Activated CD8-positive, alpha-beta memory T cell treated with anti-CD3 and anti-CD28 coated beads, Interleukin-2, amount 10 ng/mL, durations not matched to agents 7 days and 5 days (primary cell): ENCODE measurements at regions of chr2 and their contacts with region 1.

Region 1: GRCh38 chr2:96554293-96555145 is 18.0 kb downstream of the ARID5A start:
- DNase-seq: peak; percentile 76
- ATAC-seq: peak; percentile 79
- H3K4me3 Mint-ChIP-seq: no peak overlapping the region
- H3K27ac Mint-ChIP-seq: no peak overlapping the region
- H3K4me1 Mint-ChIP-seq: peaks cover 38% of the 10 kb centered on the region
- H3K27me3 Mint-ChIP-seq: no peaks in the 10 kb centered on the region

Region 2: GRCh38 chr2:96396095-96396494 is 158.4 kb before region 1 on chr2:
- CTCF ChIA-PET with region 1: no interaction called
- DNase-seq: no peak
- ATAC-seq: no peak
- H3K4me3 Mint-ChIP-seq: no peak overlapping the region
- H3K27ac Mint-ChIP-seq: no peak overlapping the region
- H3K4me1 Mint-ChIP-seq: peaks cover 3% of the 10 kb centered on the region
- H3K27me3 Mint-ChIP-seq: peaks cover 11% of the 10 kb centered on the region

Region 3: DNA sequence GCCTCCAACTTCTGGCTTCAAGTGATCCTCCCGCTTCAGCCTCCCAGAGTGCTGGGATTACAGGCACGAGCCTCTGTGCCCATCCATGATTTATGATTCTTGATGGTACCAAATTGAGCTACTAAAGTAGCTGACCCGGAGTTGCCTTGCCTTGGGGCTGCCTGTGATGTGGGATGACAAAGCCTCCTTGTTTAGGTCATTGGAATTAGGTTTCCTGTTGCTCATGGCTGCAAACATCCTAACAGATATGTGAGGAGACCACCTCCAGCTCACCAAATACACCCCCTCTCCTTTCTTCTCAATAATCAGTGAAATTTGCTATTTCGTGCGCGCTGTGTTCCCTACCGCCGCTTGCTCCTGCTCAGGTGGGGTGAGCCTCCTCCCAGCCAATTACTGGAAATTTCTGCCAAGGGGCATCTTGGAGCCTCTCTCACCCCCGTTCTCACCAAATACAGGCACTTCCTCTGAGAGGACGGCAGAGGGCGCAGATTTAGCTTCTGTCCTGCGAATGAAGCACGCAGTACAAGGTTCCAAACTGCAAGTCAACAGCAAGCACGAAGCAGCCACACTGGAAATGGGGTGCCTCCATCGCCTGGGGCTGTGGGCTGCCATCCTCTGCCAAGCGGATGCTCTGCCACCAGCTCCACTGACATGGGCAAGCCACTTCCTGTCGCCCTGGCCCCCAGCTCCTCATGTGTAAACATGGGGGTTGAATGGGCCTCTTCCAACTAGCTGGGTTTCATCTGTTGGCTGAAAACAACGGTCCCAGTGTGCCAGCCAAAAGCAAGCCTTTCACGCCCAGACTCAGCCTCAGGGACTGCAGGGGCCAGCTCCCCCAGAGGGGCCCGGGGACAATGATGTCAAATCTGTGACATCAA is 147.2 kb before region 1 on chr2:
- CTCF ChIA-PET with region 1: interaction called, 63 read pairs
- DNase-seq: peak; percentile 85
- ATAC-seq: peak; percentile 90
- H3K4me3 Mint-ChIP-seq: peak overlapping the region; percentile 31
- H3K27ac Mint-ChIP-seq: peak overlapping the region; percentile 85
- H3K4me1 Mint-ChIP-seq: peaks cover 24% of the 10 kb centered on the region
- H3K27me3 Mint-ChIP-seq: no peaks in the 10 kb centered on the region

Region 4: DNA sequence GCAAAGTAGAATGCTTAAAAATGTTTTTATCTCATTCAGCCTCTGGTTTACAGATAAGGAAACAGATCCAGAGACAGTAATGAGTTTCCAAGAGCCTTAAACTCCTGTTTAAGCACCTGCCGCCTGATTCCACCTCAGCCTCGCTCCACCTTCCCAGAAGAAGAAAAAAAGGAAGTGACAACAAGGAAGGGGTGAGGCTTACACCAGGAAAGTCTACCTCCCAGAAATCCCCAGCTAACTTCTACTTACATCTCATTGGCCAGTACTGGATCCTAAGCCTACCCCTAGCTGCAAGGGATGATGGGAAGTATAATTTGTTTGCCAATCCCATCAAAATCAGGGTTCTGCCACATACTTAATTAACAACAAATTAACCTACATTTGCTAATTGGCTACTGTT is 33.3 kb before region 1 on chr2:
- CTCF ChIA-PET with region 1: interaction called, 85 read pairs
- DNase-seq: no peak
- ATAC-seq: no peak
- H3K4me3 Mint-ChIP-seq: no peak overlapping the region
- H3K27ac Mint-ChIP-seq: no peak overlapping the region
- H3K4me1 Mint-ChIP-seq: peaks cover 53% of the 10 kb centered on the region
- H3K27me3 Mint-ChIP-seq: no peaks in the 10 kb centered on the region

Region 5: DNA sequence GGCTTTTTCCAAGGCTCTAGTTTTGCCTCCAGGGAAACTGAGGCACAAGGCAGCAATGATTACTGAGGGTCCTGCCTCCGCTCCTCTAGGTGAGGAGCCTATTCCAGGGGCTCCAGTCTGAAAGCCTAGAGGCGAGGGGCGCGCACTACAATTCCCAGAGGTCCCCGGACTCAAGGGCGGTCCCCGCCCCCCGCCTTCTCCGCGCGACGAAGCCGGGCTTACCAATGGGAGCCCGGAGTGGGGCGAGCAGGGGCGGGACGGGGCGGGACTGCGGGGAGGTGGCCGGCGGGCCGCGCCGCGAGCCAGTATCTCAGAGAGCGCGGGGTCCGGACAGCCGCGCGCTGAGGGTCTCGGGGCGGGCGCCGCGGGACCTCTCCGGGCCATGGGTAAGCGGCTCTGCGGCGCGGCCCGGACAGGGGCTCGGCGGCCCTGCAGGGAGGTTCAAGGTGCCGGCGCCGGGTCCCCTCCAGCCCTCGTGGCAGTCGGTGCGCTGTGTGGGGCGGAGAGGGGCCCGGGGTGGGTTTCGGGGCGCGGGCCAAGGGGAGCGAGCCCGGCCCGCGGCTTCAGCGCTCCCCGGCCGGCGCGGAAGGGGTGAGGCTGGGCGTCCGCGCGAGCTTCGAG is 18.0 kb before region 1 on chr2 and contains the start of gene ARID5A:
- CTCF ChIA-PET with region 1: interaction called, 53 read pairs
- DNase-seq: peak; percentile 95
- ATAC-seq: peak; percentile 73
- H3K4me3 Mint-ChIP-seq: peak within 1 kb of the TSS; percentile 90
- H3K27ac Mint-ChIP-seq: peak within 1 kb of the TSS; percentile 94
- H3K4me1 Mint-ChIP-seq: peaks cover 70% of the 10 kb centered on the region
- H3K27me3 Mint-ChIP-seq: no peaks in the 10 kb centered on the region
- total RNA-seq, gene ARID5A: 57.9 to 70.5 TPM

Region 6: DNA sequence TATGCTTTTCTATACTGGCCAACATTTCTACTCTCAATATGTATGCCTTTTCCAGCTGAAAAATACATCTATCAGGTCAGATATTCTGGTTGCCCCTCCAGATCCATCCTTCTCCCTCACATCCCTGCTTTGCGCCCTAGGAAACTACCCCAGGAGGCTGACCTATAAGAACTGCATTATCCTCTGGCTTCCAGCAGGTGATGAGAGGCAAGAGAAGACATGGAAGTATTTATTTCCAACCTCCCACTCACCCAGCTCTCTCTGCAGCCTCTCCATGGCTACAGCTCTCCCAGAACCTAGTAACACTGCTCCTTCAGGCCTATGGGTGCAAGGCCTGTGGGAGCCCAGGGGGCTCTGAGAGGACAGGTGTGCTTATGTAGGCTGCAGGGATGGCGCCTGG is 24.9 kb after region 1 on chr2:
- CTCF ChIA-PET with region 1: interaction called, 10 read pairs
- DNase-seq: no peak
- ATAC-seq: no peak
- H3K4me3 Mint-ChIP-seq: no peak overlapping the region
- H3K27ac Mint-ChIP-seq: no peak overlapping the region
- H3K4me1 Mint-ChIP-seq: no peaks in the 10 kb centered on the region
- H3K27me3 Mint-ChIP-seq: no peaks in the 10 kb centered on the region